A673 (cell line): ENCODE measurements at regions of chr15 and their contacts with region 1.

Region 1: GRCh38 chr15:70132139-70132538 is 34.4 kb upstream of the TLE3 start:
- DNase-seq: no peak
- H3K4me3 ChIP-seq: no peak overlapping the region
- H3K27ac ChIP-seq: no peak overlapping the region
- H3K4me1 ChIP-seq: no peaks in the 10 kb centered on the region
- H3K27me3 ChIP-seq: no peaks in the 10 kb centered on the region
- CTCF ChIP-seq: no peak

Region 2: DNA sequence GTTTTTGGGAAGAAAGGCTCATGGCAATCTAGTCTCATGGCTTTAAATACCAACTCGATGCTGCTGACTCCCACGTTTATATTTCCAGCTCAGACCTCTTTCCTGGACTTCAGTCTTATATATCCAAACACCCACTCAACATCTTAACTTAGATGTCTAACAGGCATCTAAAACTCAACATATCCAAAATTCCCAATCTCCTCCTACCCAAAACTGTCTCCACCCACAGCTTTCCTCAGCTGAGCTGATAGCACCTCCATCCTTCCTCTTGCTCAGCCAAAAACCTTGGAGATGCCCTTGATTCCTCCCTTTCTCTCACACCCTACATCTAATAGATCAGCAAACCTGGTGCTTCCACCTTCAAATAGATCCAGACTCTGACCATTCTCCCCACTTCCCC is 236.9 kb before region 1 on chr15:
- CTCF ChIA-PET with region 1: no interaction called
- POLR2A ChIA-PET with region 1: interaction called, 10 read pairs
- intact Hi-C with region 1: no loop called
- DNase-seq: no peak
- H3K4me3 ChIP-seq: no peak overlapping the region
- H3K27ac ChIP-seq: no peak overlapping the region
- H3K4me1 ChIP-seq: no peaks in the 10 kb centered on the region
- H3K27me3 ChIP-seq: no peaks in the 10 kb centered on the region
- CTCF ChIP-seq: no peak

Region 3: DNA sequence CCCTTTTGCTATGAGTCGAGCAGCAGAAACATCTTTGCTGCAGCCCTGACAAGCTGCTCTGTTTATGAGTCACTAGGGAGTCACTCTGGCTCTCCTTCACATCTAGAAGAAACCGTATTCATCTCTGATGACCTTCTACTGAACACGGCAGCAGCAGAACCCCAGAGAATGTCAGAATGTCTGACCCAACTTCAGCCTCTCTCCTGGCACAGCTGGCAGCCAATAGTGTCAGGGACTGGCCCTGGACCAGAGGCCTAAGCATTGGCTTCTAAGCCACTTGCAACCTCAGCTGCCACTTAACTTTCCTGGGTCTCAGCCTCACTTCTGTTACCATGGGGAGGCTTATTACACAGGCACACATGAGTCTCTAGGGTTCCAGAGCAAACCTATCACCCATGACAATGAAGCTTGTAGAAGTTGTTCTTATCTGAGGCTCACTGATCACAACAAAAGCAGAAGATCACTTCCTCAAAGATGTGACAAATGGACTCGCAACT is 149.7 kb after region 1 on chr15:
- CTCF ChIA-PET with region 1: no interaction called
- POLR2A ChIA-PET with region 1: no interaction called
- intact Hi-C with region 1: no loop called
- DNase-seq: no peak
- H3K4me3 ChIP-seq: no peak overlapping the region
- H3K27ac ChIP-seq: no peak overlapping the region
- H3K4me1 ChIP-seq: peaks cover 8% of the 10 kb centered on the region
- H3K27me3 ChIP-seq: no peaks in the 10 kb centered on the region
- CTCF ChIP-seq: no peak